CD4-positive, alpha-beta memory T cell (primary cell): ENCODE measurements at regions of chr17 and their contacts with region 1.

Region 1: GRCh38 chr17:17823433-17824118 is 13.2 kb downstream of the SREBF1 start:
- DNase-seq: peak; percentile 81 to 87 (median 85)
- H3K4me3 ChIP-seq: peak overlapping the region; percentile 38 to 53
- H3K4me3 Mint-ChIP-seq: peak overlapping the region; percentile 76 to 92 (median 81)
- H3K27ac ChIP-seq: peak overlapping the region; percentile 82
- H3K27ac Mint-ChIP-seq: peak overlapping the region; percentile 88 to 97 (median 96)
- H3K4me1 ChIP-seq: peaks cover 87% of the 10 kb centered on the region
- H3K4me1 Mint-ChIP-seq: peaks cover 41 to 96% (median 76%) of the 10 kb centered on the region in 4 donors
- H3K27me3 ChIP-seq: no peaks in the 10 kb centered on the region
- H3K27me3 Mint-ChIP-seq: no peaks in the 10 kb centered on the region

Region 2: DNA sequence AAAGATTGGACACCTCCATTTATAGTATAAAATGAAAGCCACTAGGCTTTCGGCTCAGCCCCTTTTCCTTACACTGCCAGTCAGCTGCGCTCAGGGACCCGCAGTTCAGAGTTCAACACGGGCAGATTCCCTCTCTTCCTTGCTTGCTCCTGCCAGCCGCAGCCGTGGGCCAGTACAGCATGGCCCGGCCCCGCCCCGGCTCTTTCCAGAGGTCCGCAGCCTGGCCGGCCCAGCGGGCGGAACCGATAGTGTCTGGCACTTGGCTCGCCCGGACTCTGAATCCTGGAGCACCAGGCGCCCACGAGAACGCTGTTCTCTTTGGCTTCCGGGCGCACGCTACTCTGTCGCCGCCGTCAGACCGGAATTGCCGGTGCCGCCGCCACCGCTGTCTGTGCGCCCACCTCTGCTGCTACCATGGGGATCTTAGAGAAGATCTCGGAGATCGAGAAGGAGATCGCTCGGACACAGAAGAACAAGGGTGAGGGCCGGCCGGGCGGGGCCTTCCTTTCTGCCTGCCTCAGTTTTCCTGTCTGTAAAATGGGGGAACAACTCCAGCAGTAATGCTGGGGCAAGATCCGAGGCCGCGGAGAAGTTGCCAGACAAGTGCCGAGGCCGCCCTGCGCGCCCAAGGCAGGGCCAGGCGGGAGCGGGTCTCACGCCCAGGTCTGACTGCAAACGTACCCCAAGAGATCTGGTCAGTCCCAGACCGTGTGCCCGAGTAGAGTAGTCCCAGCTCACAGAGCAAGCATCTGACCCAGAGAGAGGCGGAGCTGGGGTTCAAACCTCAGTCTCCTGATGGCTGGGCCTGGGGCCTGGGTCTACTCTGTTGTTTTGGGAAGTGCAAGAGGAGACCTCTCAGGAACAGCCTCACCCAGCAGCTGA is 264.3 kb after region 1 on chr17 and contains the start of gene DRG2:
- CTCF ChIA-PET with region 1: no interaction called
- POLR2A ChIA-PET with region 1: no interaction called
- intact Hi-C with region 1: loop called (anchors 2 kb)
- DNase-seq: peak; percentile 84 to 90 (median 86)
- H3K4me3 ChIP-seq: peak within 1 kb of the TSS; percentile 71 to 99
- H3K4me3 Mint-ChIP-seq: peak within 1 kb of the TSS; percentile 98 to 100 (median 99)
- H3K27ac ChIP-seq: peak within 1 kb of the TSS; percentile 87
- H3K27ac Mint-ChIP-seq: peak within 1 kb of the TSS; percentile 98 to 99 (median 98)
- H3K4me1 ChIP-seq: peaks cover 23% of the 10 kb centered on the region
- H3K4me1 Mint-ChIP-seq: peaks cover 20 to 43% (median 25%) of the 10 kb centered on the region in 4 donors
- H3K27me3 ChIP-seq: no peaks in the 10 kb centered on the region
- H3K27me3 Mint-ChIP-seq: no peaks in the 10 kb centered on the region
- total RNA-seq, gene DRG2: 56.8 to 61.0 TPM